GM12878 (cell line): ENCODE measurements at regions of chr17 and their contacts with region 1.

Region 1: DNA sequence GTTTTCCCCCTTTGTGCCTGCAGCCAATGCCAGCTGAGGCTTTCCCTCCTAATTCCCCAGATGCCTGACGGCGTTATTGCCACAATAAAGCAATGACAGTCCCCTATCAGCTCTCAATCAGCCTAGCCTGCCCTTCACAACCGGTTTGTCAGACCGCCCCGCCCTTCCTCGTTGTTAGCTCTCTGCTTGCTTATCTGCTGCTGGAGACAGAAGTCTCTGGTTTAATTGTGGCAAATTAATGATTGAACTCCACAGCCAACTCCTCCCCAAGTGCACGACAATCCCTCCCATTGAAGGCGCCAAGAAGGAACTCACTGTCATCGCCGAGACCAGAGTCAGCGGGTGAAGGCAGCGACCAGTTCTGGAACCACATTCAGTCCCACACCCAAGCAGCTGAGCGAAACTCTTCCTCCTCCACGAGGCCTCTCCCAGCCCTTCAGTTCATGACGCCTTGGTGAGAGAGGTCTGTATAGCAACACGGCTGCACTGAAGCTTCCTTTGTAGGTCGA is 474.4 kb downstream of the SLC39A11 start:
- DNase-seq: no peak
- ATAC-seq: peak; percentile 48
- H3K4me3 ChIP-seq: no peak overlapping the region
- H3K27ac ChIP-seq: no peak overlapping the region
- H3K4me1 ChIP-seq: no peaks in the 10 kb centered on the region
- H3K27me3 ChIP-seq: no peaks in the 10 kb centered on the region
- CTCF ChIP-seq: no peak
- EP300 ChIP-seq: no peak
- POLR2A ChIP-seq: no peak
- RAD21 ChIP-seq: no peak

Region 2: DNA sequence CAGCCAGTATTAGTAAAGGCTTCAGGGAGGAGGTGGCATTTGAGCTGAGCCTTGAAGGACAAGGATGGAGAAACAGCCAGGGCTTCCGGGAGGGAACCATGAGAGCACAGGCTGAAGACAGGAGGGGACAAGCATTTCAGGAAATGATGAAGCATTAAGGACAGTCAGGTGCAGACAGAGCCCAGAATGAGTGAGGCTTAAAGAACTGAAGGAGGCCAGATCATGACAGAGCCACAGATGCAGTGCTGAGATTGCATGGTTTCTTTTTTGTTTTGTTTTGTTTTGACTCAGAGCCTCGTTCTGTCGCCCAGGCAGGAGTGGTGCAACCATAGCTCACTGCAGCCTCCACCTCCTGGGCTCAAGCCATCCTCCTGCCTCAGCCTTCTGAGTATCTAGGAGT is 285.7 kb before region 1 on chr17:
- CTCF ChIA-PET with region 1: no interaction called
- POLR2A ChIA-PET with region 1: no interaction called
- RAD21 ChIA-PET with region 1: no interaction called
- SMC1A ChIA-PET with region 1: no interaction called
- in situ Hi-C with region 1: no loop called
- intact Hi-C with region 1: no loop called
- DNase-seq: peak; percentile 28
- ATAC-seq: peak; percentile 85
- H3K4me3 ChIP-seq: no peak overlapping the region
- H3K27ac ChIP-seq: no peak overlapping the region
- H3K4me1 ChIP-seq: no peaks in the 10 kb centered on the region
- H3K27me3 ChIP-seq: no peaks in the 10 kb centered on the region
- CTCF ChIP-seq: no peak
- EP300 ChIP-seq: no peak
- POLR2A ChIP-seq: no peak
- RAD21 ChIP-seq: no peak

Region 3: GRCh38 chr17:72545766-72546165 is 72.3 kb before region 1 on chr17:
- CTCF ChIA-PET with region 1: no interaction called
- POLR2A ChIA-PET with region 1: no interaction called
- RAD21 ChIA-PET with region 1: no interaction called
- SMC1A ChIA-PET with region 1: no interaction called
- in situ Hi-C with region 1: no loop called
- intact Hi-C with region 1: no loop called
- DNase-seq: no peak
- ATAC-seq: no peak
- H3K4me3 ChIP-seq: no peak overlapping the region
- H3K27ac ChIP-seq: no peak overlapping the region
- H3K4me1 ChIP-seq: no peaks in the 10 kb centered on the region; the same call in 1 of the 2 replicates
- H3K27me3 ChIP-seq: no peaks in the 10 kb centered on the region
- CTCF ChIP-seq: no peak
- EP300 ChIP-seq: no peak
- POLR2A ChIP-seq: no peak
- RAD21 ChIP-seq: no peak

Region 4: DNA sequence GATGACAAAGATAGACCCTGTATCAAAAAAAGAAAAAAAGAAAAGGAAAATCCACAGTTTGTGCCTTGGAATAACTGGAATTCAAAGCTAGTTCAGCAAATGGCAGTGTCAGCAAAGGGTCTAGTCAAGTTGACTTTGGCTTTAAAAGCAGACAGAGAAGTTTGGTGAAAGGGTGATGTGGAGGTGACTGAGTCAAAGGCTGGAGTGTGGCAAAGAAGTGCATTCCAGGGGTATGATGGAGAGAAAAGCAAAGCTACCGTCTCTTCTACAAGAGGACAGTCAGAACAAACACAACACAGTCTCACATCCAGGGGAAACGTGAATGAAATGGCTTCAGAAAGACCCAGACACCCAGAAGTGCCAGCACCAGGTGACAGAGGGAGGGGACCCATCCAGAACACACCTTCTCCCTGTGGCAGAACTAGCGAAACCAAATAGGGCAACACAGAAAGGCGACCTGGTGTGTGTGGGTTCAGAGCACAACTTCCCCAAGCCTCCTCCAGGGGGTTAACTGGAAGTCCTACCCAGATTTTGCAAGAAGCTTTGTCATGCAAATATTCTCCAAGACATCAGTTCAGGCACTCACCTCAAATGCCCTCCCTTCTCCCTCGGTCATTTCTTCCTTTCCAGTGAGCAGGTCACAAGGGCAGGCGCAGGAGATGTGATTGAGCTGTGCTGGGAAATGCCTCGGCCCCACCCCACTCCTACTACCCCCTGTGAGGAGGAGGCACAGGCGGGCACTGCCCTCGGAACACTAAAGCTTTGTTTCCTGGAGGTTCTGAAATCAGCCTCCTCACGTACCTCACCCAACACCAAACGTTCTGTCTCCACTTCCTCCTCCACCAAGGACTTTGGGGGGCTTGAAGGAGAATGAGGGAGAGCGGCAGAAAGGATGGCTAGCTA is 15.3 kb before region 1 on chr17:
- CTCF ChIA-PET with region 1: interaction called, 32 read pairs
- POLR2A ChIA-PET with region 1: interaction called, 47 read pairs
- RAD21 ChIA-PET with region 1: interaction called, 43 read pairs
- SMC1A ChIA-PET with region 1: interaction called, 66 read pairs
- in situ Hi-C with region 1: no loop called
- intact Hi-C with region 1: no loop called
- DNase-seq: no peak
- ATAC-seq: peak; percentile 62
- H3K4me3 ChIP-seq: no peak overlapping the region
- H3K27ac ChIP-seq: peak overlapping the region; percentile 31
- H3K4me1 ChIP-seq: peaks cover 6% of the 10 kb centered on the region
- H3K27me3 ChIP-seq: no peaks in the 10 kb centered on the region
- CTCF ChIP-seq: 0 out of 6 replicates have a peak, but pooled peaks of 2 of the 3 experiments have one; percentile 4 to 17
- EP300 ChIP-seq: no peak
- POLR2A ChIP-seq: no peak
- RAD21 ChIP-seq: no peak